ENCODE measurements at regions of chr17 and their contacts with region 1.

Region 1: GRCh38 chr17:32349854-32350665 is at the start of gene ZNF207:
- DNase-seq: peak; percentile 97
- ATAC-seq: peak; percentile 95
- H3K4me3 Mint-ChIP-seq: peak within 1 kb of the TSS; percentile 99
- H3K27ac Mint-ChIP-seq: peak within 1 kb of the TSS; percentile 100
- H3K4me1 Mint-ChIP-seq: peaks cover 35% of the 10 kb centered on the region
- H3K27me3 Mint-ChIP-seq: no peaks in the 10 kb centered on the region
- total RNA-seq, gene ZNF207: 271 to 292 TPM

Region 2: GRCh38 chr17:32253117-32253611 is 96.9 kb before region 1 on chr17:
- CTCF ChIA-PET with region 1: interaction called, 14 read pairs
- DNase-seq: peak; percentile 86
- ATAC-seq: peak; percentile 99
- H3K4me3 Mint-ChIP-seq: no peak overlapping the region
- H3K27ac Mint-ChIP-seq: no peak overlapping the region
- H3K4me1 Mint-ChIP-seq: no peaks in the 10 kb centered on the region
- H3K27me3 Mint-ChIP-seq: peaks cover 12% of the 10 kb centered on the region